Transverse colon (tissue), 4 donors: ENCODE measurements at regions of chr2 and their contacts with region 1.

Region 1: DNA sequence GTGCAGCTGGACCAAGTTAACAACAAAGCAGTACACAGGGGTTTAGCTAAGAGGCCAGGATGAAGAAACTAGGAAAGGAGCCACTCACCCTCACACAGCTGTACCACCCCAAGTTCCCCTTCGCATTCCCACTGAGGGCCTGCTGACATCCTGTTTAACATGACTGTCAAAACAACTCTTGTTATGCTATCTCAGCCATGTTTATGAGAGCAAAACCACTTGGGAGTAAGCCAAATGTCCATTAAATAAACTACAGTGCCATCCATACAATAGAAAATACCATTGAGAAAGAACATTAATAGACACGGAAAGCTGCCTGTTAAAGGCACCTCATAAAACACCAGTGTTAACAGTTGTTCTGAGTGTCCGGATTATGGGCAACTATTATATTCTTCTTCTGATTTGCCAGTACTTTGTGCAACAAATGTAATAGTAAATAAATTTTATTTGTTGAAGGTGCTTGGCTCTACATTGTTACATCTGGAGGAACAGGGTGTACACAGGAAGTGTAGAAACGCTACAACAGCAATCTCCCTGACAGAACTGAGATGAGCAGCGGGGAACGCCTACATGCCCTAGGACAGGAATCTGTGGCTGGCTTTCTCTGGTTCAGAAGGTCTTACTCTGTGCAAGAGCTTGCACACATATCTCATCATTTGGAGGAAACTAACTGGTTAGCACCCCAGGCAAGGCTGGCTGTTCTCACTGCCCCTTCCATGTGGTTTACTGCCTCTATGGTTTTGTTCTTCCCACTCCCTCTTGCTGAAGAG is 85.6 kb downstream of the EHD3 start:
- DNase-seq: peak; percentile 51
- H3K4me3 ChIP-seq: no peak overlapping the region
- H3K27ac ChIP-seq: peak overlapping the region; percentile 63 to 73 (median 64)
- H3K4me1 ChIP-seq: peaks cover 0 to 28% (median 7%) of the 10 kb centered on the region in 4 donors
- H3K27me3 ChIP-seq: no peaks in the 10 kb centered on the region
- CTCF ChIP-seq: no peak
- EP300 ChIP-seq: no peak
- POLR2A ChIP-seq: no peak

Region 2: DNA sequence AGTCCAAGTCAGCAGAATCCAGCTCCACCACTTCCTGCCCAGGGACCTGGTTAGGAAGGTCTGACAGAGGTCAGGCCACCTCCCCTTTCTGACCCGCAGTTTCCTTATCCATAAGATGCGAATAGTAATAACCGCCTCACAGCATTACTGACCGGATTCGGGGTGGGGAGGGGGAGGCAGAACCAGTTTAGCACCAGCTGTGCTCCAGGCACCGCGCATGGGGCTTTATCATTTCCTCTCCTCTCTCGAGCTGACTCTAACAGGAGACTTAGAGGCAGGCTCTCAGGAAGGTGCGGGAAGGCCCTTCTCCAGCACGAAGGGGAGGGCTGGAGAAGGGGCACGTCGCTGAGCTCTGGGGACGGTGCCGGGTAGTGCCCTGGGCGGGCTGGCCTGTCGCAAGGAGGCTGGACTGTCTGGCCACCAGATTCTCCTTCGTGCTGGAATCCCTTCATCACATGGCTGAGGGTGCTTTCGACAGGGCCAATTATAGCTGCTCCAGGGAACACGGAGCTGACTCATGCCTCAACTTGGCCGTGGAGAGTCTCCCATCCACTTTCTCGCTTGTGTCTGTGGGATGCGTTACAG is 79.9 kb before region 1 on chr2:
- in situ Hi-C with region 1: loop called in 1 of 4 experiments (anchors 10 kb)
- intact Hi-C with region 1: no loop called
- DNase-seq: no peak
- H3K4me3 ChIP-seq: no peak overlapping the region
- H3K27ac ChIP-seq: peak overlapping the region in 3 of 4 donors; percentile 9 to 61 (median 33)
- H3K4me1 ChIP-seq: peaks cover 0 to 13% (median 5%) of the 10 kb centered on the region in 4 donors
- H3K27me3 ChIP-seq: no peaks in the 10 kb centered on the region
- CTCF ChIP-seq: no peak
- EP300 ChIP-seq: no peak
- POLR2A ChIP-seq: no peak

Region 3: DNA sequence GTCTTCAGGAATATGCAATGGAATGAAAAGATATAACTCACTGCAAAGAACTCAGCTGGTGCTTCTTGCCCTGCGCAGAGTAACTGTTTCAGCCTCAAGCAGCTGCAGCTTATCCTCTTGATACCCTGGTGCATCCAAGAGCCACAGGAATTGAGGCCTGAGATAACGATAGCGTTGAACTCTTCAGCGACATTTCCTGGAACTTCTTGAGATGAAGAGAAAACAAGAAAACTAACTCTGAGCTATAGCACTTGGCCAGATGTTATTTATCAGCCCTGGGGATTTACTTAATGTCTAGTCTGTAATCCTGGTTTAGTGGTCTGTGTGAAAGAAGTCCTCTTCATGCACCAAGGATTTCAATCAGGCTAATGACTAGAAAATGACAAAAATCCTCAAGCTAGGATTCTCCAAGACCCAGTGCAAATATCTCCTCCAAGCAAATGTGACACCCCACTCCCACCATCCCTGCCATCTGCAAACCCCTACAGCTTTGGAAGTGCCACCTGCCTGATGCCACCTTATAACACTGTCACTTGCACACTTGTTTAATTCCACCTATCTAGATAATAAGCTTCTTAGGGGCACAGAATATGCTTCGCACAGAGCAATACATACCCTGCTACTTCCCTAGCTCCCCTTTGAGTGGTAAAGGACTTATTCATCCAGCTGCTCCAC is 45.1 kb before region 1 on chr2:
- in situ Hi-C with region 1: no loop called
- intact Hi-C with region 1: loop called (anchors 1 kb)
- DNase-seq: no peak
- H3K4me3 ChIP-seq: no peak overlapping the region
- H3K27ac ChIP-seq: no peak overlapping the region
- H3K4me1 ChIP-seq: no peaks in the 10 kb centered on the region
- H3K27me3 ChIP-seq: no peaks in the 10 kb centered on the region
- CTCF ChIP-seq: no peak
- EP300 ChIP-seq: no peak
- POLR2A ChIP-seq: no peak

Region 4: GRCh38 chr2:31606509-31606908 is 286.9 kb after region 1 on chr2:
- in situ Hi-C with region 1: no loop called
- intact Hi-C with region 1: no loop called
- DNase-seq: no peak
- H3K4me3 ChIP-seq: no peak overlapping the region
- H3K27ac ChIP-seq: no peak overlapping the region
- H3K4me1 ChIP-seq: no peaks in the 10 kb centered on the region
- H3K27me3 ChIP-seq: no peaks in the 10 kb centered on the region
- CTCF ChIP-seq: no peak
- EP300 ChIP-seq: no peak
- POLR2A ChIP-seq: no peak